CD4-positive, alpha-beta memory T cell (primary cell): ENCODE measurements at regions of chr11 and their contacts with region 1.

Region 1: GRCh38 chr11:62726915-62727763 is at the start of gene HNRNPUL2:
- DNase-seq: peak; percentile 99
- H3K4me3 ChIP-seq: peak within 1 kb of the TSS; percentile 95 to 99
- H3K4me3 Mint-ChIP-seq: peak within 1 kb of the TSS; percentile 84 to 98 (median 96)
- H3K27ac ChIP-seq: peak within 1 kb of the TSS; percentile 93
- H3K27ac Mint-ChIP-seq: peak within 1 kb of the TSS; percentile 98 to 99 (median 99)
- H3K4me1 ChIP-seq: peaks cover 50% of the 10 kb centered on the region
- H3K4me1 Mint-ChIP-seq: peaks cover 28 to 84% (median 50%) of the 10 kb centered on the region in 4 donors
- H3K27me3 ChIP-seq: no peaks in the 10 kb centered on the region
- H3K27me3 Mint-ChIP-seq: no peaks in the 10 kb centered on the region
- total RNA-seq, gene HNRNPUL2: 79.6 to 83.4 TPM

Region 2: DNA sequence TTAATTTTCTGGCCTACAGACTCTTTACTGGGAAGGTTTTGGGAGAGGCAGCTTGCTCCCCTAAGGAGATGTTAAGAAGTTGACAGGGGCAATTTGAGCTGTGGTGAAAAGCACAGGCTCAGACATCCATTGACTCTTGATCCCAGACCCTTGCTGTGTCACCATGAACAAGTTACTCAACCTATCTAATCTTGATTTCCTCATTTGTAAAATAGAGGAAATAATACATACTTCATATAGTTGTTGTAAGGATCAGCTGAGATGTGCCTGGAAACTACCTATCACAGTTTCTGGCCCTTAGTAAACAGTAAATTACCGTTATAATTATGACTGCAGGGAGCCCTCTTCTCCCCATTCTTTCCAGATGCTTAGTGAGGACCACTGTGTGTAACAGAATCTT is 411.7 kb before region 1 on chr11:
- CTCF ChIA-PET with region 1: no interaction called
- POLR2A ChIA-PET with region 1: no interaction called
- intact Hi-C with region 1: no loop called
- DNase-seq: no peak
- H3K4me3 ChIP-seq: no peak overlapping the region
- H3K4me3 Mint-ChIP-seq: no peak overlapping the region
- H3K27ac ChIP-seq: no peak overlapping the region
- H3K27ac Mint-ChIP-seq: no peak overlapping the region
- H3K4me1 ChIP-seq: peaks cover 9% of the 10 kb centered on the region
- H3K4me1 Mint-ChIP-seq: peaks cover 5 to 15% (median 12%) of the 10 kb centered on the region in 4 donors
- H3K27me3 ChIP-seq: peaks cover 3% of the 10 kb centered on the region
- H3K27me3 Mint-ChIP-seq: peaks cover 10 to 25% of the 10 kb centered on the region in 2 donors

Region 3: GRCh38 chr11:62645956-62646824 is 80.9 kb before region 1 on chr11 and contains the start of gene GANAB:
- CTCF ChIA-PET with region 1: no interaction called
- POLR2A ChIA-PET with region 1: interaction called, 12 read pairs
- intact Hi-C with region 1: no loop called
- DNase-seq: peak; percentile 95 to 99 (median 97)
- H3K4me3 ChIP-seq: peak within 1 kb of the TSS; percentile 55 to 76
- H3K4me3 Mint-ChIP-seq: peak within 1 kb of the TSS; percentile 93 to 99 (median 95)
- H3K27ac ChIP-seq: peak within 1 kb of the TSS; percentile 92
- H3K27ac Mint-ChIP-seq: peak within 1 kb of the TSS; percentile 84 to 99 (median 97)
- H3K4me1 ChIP-seq: peaks cover 37% of the 10 kb centered on the region
- H3K4me1 Mint-ChIP-seq: peaks cover 14 to 48% (median 26%) of the 10 kb centered on the region in 4 donors
- H3K27me3 ChIP-seq: no peaks in the 10 kb centered on the region
- H3K27me3 Mint-ChIP-seq: no peaks in the 10 kb centered on the region
- total RNA-seq, gene GANAB: 260 to 262 TPM

Region 4: GRCh38 chr11:62747475-62748160 is 20.5 kb after region 1 on chr11:
- CTCF ChIA-PET with region 1: interaction called, 4 read pairs
- POLR2A ChIA-PET with region 1: interaction called, 231 read pairs
- intact Hi-C with region 1: no loop called
- DNase-seq: no peak
- H3K4me3 ChIP-seq: no peak overlapping the region
- H3K4me3 Mint-ChIP-seq: no peak overlapping the region
- H3K27ac ChIP-seq: no peak overlapping the region
- H3K27ac Mint-ChIP-seq: no peak overlapping the region
- H3K4me1 ChIP-seq: peaks cover 30% of the 10 kb centered on the region
- H3K4me1 Mint-ChIP-seq: peaks cover 9 to 26% (median 14%) of the 10 kb centered on the region in 4 donors
- H3K27me3 ChIP-seq: no peaks in the 10 kb centered on the region
- H3K27me3 Mint-ChIP-seq: no peaks in the 10 kb centered on the region

Region 5: DNA sequence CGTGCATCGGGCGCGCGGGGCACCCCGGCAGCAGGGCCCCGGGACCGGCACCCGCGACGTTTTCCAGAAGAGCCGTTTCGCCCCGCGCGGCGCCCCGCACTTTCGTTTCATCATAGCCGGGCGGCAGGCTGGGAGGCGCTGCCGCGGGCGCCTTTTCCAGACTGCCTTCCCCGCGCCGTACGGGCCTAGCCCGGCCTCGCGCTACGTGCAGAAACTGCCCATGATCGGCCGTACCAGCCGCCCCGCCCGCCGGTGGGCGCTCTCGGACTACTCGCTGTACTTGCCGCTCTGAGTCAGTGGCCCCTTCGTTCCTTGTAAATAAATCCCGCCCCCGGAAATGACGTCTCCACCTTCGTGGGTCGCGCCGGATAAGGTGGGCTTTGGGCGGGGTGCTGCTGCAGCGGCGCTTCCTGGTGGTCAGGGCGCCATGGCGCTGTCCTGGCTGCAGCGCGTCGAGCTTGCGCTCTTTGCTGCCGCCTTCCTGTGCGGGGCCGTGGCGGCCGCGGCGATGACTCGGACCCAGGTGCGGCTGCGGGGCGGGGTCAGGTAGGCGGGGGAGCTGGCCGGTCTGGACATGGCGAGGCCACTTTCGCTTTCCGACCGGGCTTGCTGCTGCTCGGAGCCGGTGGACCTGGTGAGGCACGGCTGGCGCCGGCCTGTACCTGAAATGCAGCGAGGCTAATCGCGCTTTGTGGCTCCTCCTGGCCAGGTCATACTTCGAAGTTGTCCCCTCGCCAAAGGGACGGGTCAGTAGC is 60.0 kb after region 1 on chr11 and contains the start of gene TMEM179B:
- CTCF ChIA-PET with region 1: interaction called, 21 read pairs
- POLR2A ChIA-PET with region 1: interaction called, 71 read pairs
- intact Hi-C with region 1: loop called (anchors 1 kb)
- DNase-seq: peak; percentile 95 to 99 (median 96)
- H3K4me3 ChIP-seq: peak within 1 kb of the TSS; percentile 73 to 95
- H3K4me3 Mint-ChIP-seq: peak within 1 kb of the TSS; percentile 93 to 97 (median 96)
- H3K27ac ChIP-seq: peak within 1 kb of the TSS; percentile 84
- H3K27ac Mint-ChIP-seq: peak within 1 kb of the TSS; percentile 89 to 98 (median 97)
- H3K4me1 ChIP-seq: peaks cover 45% of the 10 kb centered on the region
- H3K4me1 Mint-ChIP-seq: peaks cover 29 to 61% (median 47%) of the 10 kb centered on the region in 4 donors
- H3K27me3 ChIP-seq: no peaks in the 10 kb centered on the region
- H3K27me3 Mint-ChIP-seq: no peaks in the 10 kb centered on the region
- total RNA-seq, gene TMEM179B: 66.3 to 66.6 TPM

Region 6: DNA sequence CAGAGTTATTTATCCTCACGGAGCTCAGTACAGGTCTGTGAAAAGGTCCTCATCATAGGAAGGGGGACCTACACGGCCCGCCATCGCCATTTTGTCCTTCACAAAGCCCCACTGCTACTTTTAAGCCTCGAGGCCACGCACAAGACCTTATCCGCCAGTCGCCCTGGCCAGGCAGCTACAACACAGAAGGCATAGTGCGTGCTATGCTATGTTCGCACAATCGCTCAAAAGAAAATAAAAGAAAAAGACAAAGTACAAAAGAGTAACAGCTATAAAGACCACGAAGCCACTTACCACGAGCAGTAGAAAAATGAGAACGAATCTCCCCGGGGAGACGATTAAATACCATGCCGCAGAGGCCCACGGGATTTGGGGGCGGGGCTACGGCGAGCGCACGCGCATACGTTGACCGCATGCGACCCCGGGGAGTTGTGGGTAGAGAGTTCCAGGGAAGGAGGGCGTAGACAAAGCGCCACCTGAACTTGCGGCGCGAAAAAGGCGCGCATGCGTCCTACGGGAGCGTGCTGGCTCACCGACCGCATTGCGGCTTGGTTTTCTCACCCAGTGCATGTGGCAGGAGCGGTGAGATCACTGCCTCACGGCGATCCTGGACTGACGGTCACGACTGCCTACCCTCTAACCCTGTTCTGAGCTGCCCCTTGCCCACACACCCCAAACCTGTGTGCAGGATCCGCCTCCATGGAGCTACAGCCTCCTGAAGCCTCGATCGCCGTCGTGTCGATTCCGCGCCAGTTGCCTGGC is 128.6 kb after region 1 on chr11:
- CTCF ChIA-PET with region 1: no interaction called
- POLR2A ChIA-PET with region 1: interaction called, 95 read pairs
- intact Hi-C with region 1: loop called (anchors 1 kb)
- DNase-seq: peak; percentile 98 to 99 (median 99)
- H3K4me3 ChIP-seq: peak overlapping the region; percentile 89 to 91
- H3K4me3 Mint-ChIP-seq: peak overlapping the region; percentile 95 to 99 (median 96)
- H3K27ac ChIP-seq: peak overlapping the region; percentile 78
- H3K27ac Mint-ChIP-seq: peak overlapping the region; percentile 93 to 98 (median 95)
- H3K4me1 ChIP-seq: peaks cover 57% of the 10 kb centered on the region
- H3K4me1 Mint-ChIP-seq: peaks cover 41 to 67% (median 55%) of the 10 kb centered on the region in 4 donors
- H3K27me3 ChIP-seq: no peaks in the 10 kb centered on the region
- H3K27me3 Mint-ChIP-seq: no peaks in the 10 kb centered on the region